ENCODE measurements at regions of chr5 and their contacts with region 1.

Region 1: DNA sequence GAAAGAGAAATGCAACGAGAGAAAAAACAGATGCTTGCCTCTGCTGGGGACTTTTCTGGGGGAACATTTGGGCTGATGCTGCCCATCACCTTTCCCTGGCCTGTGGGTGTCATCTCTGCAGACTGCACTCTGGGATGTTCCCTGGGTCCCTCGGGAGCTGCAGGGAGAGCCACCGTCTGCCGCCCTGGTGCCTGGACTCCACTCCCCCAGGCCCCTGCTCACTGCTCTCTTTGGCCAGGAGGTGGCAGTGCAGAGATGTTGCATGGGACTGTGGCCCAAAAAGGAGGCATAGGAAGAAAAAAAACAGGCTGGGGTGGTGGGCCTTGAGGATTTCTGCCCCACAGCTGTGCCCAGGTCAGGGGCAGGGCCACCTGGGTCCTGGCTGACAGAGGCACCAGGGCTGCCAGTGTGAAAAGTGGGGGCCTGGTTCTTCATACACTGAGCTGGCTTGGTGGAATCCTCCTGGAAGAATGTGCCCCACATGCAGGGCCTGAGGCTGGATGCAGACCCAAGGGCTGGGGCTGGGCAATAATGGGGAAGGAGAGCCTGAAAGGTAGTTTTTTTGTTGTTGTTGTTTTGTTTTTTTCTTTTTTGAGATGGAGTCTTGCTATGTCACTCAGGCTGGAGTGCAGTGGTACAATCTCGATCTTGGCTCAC is 353.6 kb downstream of the SLIT3 start:
- DNase-seq: peak; percentile 73
- ATAC-seq: peak; percentile 58
- H3K4me3 Mint-ChIP-seq: no peak overlapping the region
- H3K27ac Mint-ChIP-seq: no peak overlapping the region
- H3K4me1 Mint-ChIP-seq: peaks cover 8% of the 10 kb centered on the region
- H3K27me3 Mint-ChIP-seq: no peaks in the 10 kb centered on the region

Region 2: GRCh38 chr5:168486136-168486879 is 461.0 kb before region 1 on chr5 and contains the start of gene RARS1:
- CTCF ChIA-PET with region 1: no interaction called
- POLR2A ChIA-PET with region 1: no interaction called
- intact Hi-C with region 1: loop called in 1 of 2 experiments (anchors 5 kb)
- DNase-seq: peak; percentile 94
- ATAC-seq: peak; percentile 92
- H3K4me3 Mint-ChIP-seq: peak within 1 kb of the TSS; percentile 100
- H3K27ac Mint-ChIP-seq: peak within 1 kb of the TSS; percentile 97
- H3K4me1 Mint-ChIP-seq: peaks cover 36% of the 10 kb centered on the region
- H3K27me3 Mint-ChIP-seq: no peaks in the 10 kb centered on the region
- total RNA-seq, gene RARS1: 127 to 135 TPM

Region 3: DNA sequence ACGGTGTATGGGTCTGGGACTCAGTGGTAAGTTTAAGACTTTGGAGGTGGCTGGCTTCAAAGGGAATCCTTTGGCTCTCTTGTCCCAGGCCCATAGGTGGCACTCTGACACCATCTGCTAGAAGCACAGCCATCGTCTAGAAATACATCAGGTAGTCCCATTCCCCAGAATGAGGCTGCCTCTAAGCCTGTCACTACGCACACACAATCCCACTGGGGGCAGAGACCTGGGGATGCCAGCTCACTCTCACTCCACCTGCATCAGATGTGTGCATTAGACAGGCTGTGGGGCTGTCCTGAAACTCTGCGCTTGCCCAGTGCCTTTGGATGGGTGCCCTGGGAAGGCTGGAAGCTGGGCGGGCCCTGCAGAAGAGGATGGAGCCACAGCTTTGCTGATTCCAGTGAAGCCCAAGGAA is 240.7 kb before region 1 on chr5:
- CTCF ChIA-PET with region 1: interaction called, 6 read pairs
- POLR2A ChIA-PET with region 1: no interaction called
- intact Hi-C with region 1: loop called (anchors 1 kb)
- DNase-seq: peak; percentile 68
- ATAC-seq: peak; percentile 84
- H3K4me3 Mint-ChIP-seq: no peak overlapping the region
- H3K27ac Mint-ChIP-seq: no peak overlapping the region
- H3K4me1 Mint-ChIP-seq: peaks cover 2% of the 10 kb centered on the region
- H3K27me3 Mint-ChIP-seq: no peaks in the 10 kb centered on the region